Endothelial cell of umbilical vein (primary cell): ENCODE measurements at regions of chr1 and their contacts with region 1.

Region 1: GRCh38 chr1:171841050-171841940 is at the start of gene DNM3:
- DNase-seq: peak; percentile 87
- H3K4me3 ChIP-seq: peak within 1 kb of the TSS; percentile 42 to 75 (median 73)
- H3K27ac ChIP-seq: peak within 1 kb of the TSS; percentile 55
- H3K4me1 ChIP-seq: peaks cover 15% of the 10 kb centered on the region
- H3K27me3 ChIP-seq: peaks cover 0 to 6% of the 10 kb centered on the region in 2 experiments
- CTCF ChIP-seq: no peak
- POLR2A ChIP-seq: peak; percentile 71
- total RNA-seq, gene DNM3: 2.5 and 3.6 TPM in 2 replicates

Region 2: GRCh38 chr1:171654942-171655745 is 186.2 kb before region 1 on chr1:
- CTCF ChIA-PET with region 1: no interaction called
- POLR2A ChIA-PET with region 1: no interaction called
- dilution Hi-C with region 1: no loop called
- intact Hi-C with region 1: loop called (anchors 2 kb)
- DNase-seq: peak; percentile 72
- H3K4me3 ChIP-seq: no peak overlapping the region
- H3K27ac ChIP-seq: peak overlapping the region; percentile 63
- H3K4me1 ChIP-seq: peaks cover 17% of the 10 kb centered on the region
- H3K27me3 ChIP-seq: peaks cover 0 to 6% of the 10 kb centered on the region in 2 experiments
- CTCF ChIP-seq: peak; percentile 86 to 95
- POLR2A ChIP-seq: no peak

Region 3: DNA sequence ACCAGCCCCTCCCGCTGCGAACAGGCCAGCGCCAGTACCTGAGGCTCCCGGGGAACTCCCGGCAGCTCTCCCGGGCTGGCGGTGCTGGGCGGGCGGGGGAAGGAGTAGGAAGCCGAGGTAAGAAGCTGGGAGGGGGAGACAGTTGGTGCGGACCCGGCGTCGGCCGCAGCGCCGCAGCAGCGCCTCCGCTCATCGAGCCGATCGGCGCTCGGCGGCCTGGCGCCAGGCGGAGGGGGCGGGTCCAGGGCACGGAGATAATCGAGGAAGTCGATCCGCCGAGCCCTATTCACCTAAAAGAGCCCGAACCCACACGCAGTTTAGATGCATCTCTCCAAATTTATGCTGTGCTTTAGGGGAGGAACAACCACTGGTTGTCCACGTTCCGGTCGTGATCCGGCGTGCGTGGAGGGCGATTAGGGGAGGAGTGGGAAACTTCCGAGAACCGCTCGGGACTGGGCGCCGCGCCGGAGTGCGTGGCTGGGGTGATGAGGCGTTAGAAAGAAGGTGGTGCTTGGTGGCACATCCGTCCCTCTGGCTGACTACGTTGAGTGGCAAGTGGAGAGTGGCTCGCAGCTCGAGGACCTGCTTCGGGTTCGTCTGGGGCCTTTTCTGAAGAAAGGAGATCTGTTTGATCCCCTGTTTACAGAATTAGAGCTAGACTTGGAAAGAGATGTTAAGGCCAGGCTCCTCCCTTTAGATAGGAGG is 99.3 kb before region 1 on chr1 and contains the start of gene VAMP4:
- CTCF ChIA-PET with region 1: no interaction called
- POLR2A ChIA-PET with region 1: no interaction called
- dilution Hi-C with region 1: no loop called
- intact Hi-C with region 1: loop called (anchors 1 kb)
- DNase-seq: peak; percentile 87
- H3K4me3 ChIP-seq: peak within 1 kb of the TSS; percentile 59 to 83 (median 81)
- H3K27ac ChIP-seq: peak within 1 kb of the TSS; percentile 57
- H3K4me1 ChIP-seq: peaks cover 31% of the 10 kb centered on the region
- H3K27me3 ChIP-seq: no peaks in the 10 kb centered on the region
- CTCF ChIP-seq: no peak
- POLR2A ChIP-seq: peak; percentile 60
- total RNA-seq, gene VAMP4: 10.1 and 10.4 TPM in 2 replicates

Region 4: DNA sequence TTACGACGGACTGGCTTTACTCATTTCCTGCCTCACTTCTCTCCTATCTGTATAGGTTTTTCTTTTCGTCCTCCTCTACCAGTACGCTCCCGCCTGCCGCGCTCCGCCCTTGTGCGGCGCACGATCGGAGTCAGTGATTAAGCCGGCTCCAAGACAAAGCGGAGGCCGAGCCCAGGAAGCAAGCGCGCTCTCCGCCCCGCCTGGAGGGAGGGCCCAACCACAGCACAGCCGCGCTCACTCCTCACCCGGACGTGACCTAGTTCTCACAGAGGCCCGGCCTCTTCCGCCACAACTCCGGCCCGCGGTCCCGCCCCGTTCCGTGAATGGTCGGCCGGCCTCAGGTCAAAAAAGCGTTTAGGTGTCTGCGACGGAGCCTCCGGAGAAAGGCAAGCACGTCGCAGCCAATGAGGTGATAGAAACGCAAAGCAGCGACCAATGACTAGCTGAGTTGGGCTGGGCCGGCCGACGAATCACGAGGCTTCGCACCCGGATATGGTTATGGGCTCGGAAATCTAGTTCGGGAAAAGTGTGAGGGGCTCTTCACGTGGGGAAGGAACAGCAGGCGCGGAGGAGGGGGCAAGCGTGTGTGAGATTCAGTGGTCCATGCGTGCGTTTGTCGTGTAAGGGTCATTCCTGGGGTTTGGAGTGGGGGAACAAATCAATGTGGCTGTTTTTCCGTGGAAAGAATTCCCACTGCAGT is 60.0 kb before region 1 on chr1 and contains the start of gene METTL13:
- CTCF ChIA-PET with region 1: no interaction called
- POLR2A ChIA-PET with region 1: no interaction called
- dilution Hi-C with region 1: no loop called
- intact Hi-C with region 1: loop called (anchors 1 kb)
- DNase-seq: peak; percentile 100
- H3K4me3 ChIP-seq: peak within 1 kb of the TSS; percentile 69 to 85 (median 81)
- H3K27ac ChIP-seq: peak within 1 kb of the TSS; percentile 66
- H3K4me1 ChIP-seq: peaks cover 7% of the 10 kb centered on the region
- H3K27me3 ChIP-seq: peaks cover 0 to 1% of the 10 kb centered on the region in 2 experiments
- CTCF ChIP-seq: no peak
- POLR2A ChIP-seq: peak; percentile 65
- total RNA-seq, gene METTL13: 26.5 and 29.7 TPM in 2 replicates

Region 5: GRCh38 chr1:171913385-171913784 is 72.1 kb after region 1 on chr1:
- CTCF ChIA-PET with region 1: no interaction called
- POLR2A ChIA-PET with region 1: no interaction called
- dilution Hi-C with region 1: no loop called
- intact Hi-C with region 1: loop called (anchors 2 kb)
- DNase-seq: peak; percentile 56
- H3K4me3 ChIP-seq: no peak overlapping the region
- H3K27ac ChIP-seq: no peak overlapping the region
- H3K4me1 ChIP-seq: peaks cover 11% of the 10 kb centered on the region
- H3K27me3 ChIP-seq: no peaks in the 10 kb centered on the region
- CTCF ChIP-seq: no peak
- POLR2A ChIP-seq: no peak

Region 6: GRCh38 chr1:171948511-171948910 is 107.2 kb after region 1 on chr1:
- CTCF ChIA-PET with region 1: no interaction called
- POLR2A ChIA-PET with region 1: no interaction called
- dilution Hi-C with region 1: no loop called
- intact Hi-C with region 1: loop called (anchors 1 kb)
- DNase-seq: peak; percentile 79
- H3K4me3 ChIP-seq: no peak overlapping the region
- H3K27ac ChIP-seq: no peak overlapping the region
- H3K4me1 ChIP-seq: peaks cover 12% of the 10 kb centered on the region
- H3K27me3 ChIP-seq: no peaks in the 10 kb centered on the region
- CTCF ChIP-seq: no peak
- POLR2A ChIP-seq: no peak

Region 7: DNA sequence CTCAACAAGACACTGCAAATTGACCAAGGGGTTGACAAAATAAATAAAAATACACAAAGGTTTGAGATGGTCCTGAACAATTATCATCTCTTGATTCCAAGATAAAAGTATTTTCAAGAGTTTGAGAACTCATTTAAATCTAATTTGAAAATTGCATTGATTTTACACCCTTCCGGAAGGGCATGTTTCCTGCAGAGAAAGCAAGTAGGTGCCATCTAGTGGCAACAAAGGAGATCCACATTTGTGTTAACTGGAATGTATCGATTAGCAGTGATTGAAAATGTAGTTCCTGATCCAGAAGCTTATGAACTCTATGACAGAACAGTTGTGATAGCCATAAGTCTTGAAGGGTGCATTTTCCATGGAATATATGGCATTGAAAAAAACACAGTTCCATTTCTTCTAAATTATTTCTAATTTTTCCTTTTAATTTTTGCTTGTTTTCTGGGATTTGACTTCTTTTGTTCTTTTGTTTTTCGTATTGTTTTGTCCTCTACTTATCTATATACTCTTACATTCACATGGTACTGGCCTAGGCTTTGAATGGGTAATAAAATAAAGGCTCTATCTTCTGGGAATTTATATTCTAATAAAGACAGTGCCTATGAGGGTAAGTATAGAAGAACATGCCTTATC is 143.7 kb after region 1 on chr1:
- CTCF ChIA-PET with region 1: interaction called, 15 read pairs
- POLR2A ChIA-PET with region 1: no interaction called
- dilution Hi-C with region 1: no loop called
- intact Hi-C with region 1: loop called (anchors 1 kb)
- DNase-seq: peak; percentile 36
- H3K4me3 ChIP-seq: no peak overlapping the region
- H3K27ac ChIP-seq: no peak overlapping the region
- H3K4me1 ChIP-seq: no peaks in the 10 kb centered on the region
- H3K27me3 ChIP-seq: no peaks in the 10 kb centered on the region
- CTCF ChIP-seq: peak; percentile 60 to 62
- POLR2A ChIP-seq: no peak